ENCODE measurements at regions of chr10 and their contacts with region 1.

Region 1: GRCh38 chr10:71638064-71638821 is 81.3 kb downstream of the C10orf105 start:
- DNase-seq: no peak
- H3K4me3 ChIP-seq: no peak overlapping the region
- H3K27ac ChIP-seq: no peak overlapping the region
- H3K4me1 ChIP-seq: peaks cover 5 to 44% (median 34%) of the 10 kb centered on the region in 4 experiments
- H3K27me3 ChIP-seq: peaks cover 0 to 20% (median 12%) of the 10 kb centered on the region in 4 experiments; a peak in 5 of 7 replicates
- CTCF ChIP-seq: no peak
- EP300 ChIP-seq: no peak
- POLR2A ChIP-seq: no peak
- RAD21 ChIP-seq: no peak

Region 2: DNA sequence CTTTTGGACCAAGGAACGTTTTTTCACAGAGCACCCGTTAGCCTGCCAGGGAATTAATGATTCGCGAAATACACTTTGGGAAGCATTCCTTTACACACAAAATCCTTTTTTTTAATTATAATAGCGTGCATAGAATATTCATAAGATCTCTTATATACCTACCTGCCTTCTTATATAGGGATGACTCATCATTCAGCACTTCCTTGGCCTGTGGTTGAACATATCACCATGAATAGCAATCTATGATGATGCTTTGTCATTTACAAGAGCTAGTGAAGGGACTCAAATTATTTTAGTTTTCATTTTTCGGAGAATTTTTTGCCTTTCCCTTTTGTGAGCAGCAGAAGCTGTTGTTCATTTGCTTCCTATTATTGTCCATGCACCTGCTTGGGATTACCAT is 144.5 kb before region 1 on chr10:
- CTCF ChIA-PET with region 1: no interaction called
- POLR2A ChIA-PET with region 1: no interaction called
- DNase-seq: no peak
- H3K4me3 ChIP-seq: no peak overlapping the region
- H3K27ac ChIP-seq: no peak overlapping the region
- H3K4me1 ChIP-seq: peaks cover 0 to 4% (median 1%) of the 10 kb centered on the region in 4 experiments; a peak in 1 of 7 replicates
- H3K27me3 ChIP-seq: peaks cover 0 to 29% (median 23%) of the 10 kb centered on the region in 4 experiments; a peak in 6 of 7 replicates
- CTCF ChIP-seq: no peak
- EP300 ChIP-seq: no peak
- POLR2A ChIP-seq: no peak
- RAD21 ChIP-seq: no peak

Region 3: DNA sequence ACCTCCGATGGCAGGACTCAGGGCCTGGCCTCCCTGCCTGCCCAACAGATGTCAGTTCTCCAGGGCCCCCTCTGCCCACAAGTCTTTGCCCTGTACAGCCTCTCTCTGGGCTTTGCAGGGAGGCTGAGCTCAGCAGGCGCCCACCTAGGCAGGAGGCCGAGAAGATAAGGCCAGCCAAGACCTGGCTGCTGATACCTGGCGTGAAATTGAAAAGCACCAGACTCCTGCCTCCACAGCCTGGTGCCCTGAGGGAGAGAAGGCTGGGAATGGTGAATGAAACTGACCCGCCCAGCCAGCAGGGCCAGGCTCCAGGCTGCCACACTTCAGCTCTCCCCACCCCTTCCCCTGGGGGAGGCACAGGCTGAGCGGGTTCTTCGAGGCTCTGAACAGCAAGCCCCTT is 95.8 kb before region 1 on chr10:
- CTCF ChIA-PET with region 1: no interaction called
- POLR2A ChIA-PET with region 1: no interaction called
- DNase-seq: no peak
- H3K4me3 ChIP-seq: no peak overlapping the region
- H3K27ac ChIP-seq: no peak overlapping the region
- H3K4me1 ChIP-seq: peaks cover 9 to 34% (median 20%) of the 10 kb centered on the region in 4 experiments
- H3K27me3 ChIP-seq: no peaks in the 10 kb centered on the region; a peak in 1 of 7 replicates
- CTCF ChIP-seq: no peak
- EP300 ChIP-seq: no peak
- POLR2A ChIP-seq: no peak
- RAD21 ChIP-seq: no peak

Region 4: GRCh38 chr10:71623098-71623985 is 14.9 kb before region 1 on chr10:
- CTCF ChIA-PET with region 1: interaction called, 43 read pairs
- POLR2A ChIA-PET with region 1: interaction called, 4 read pairs
- DNase-seq: no peak
- H3K4me3 ChIP-seq: peak overlapping the region in 1 of 4 experiments; percentile 33; a peak in 1 of 8 replicates
- H3K27ac ChIP-seq: no peak overlapping the region
- H3K4me1 ChIP-seq: peaks cover 25 to 52% (median 35%) of the 10 kb centered on the region in 4 experiments
- H3K27me3 ChIP-seq: no peaks in the 10 kb centered on the region
- CTCF ChIP-seq: peak in 2 of 3 experiments; percentile 6 to 46; a peak in 2 of 4 replicates
- EP300 ChIP-seq: no peak
- POLR2A ChIP-seq: no peak
- RAD21 ChIP-seq: peak; percentile 28 to 43; a peak in 3 of 4 replicates

Region 5: GRCh38 chr10:71659111-71659634 is 20.9 kb after region 1 on chr10:
- CTCF ChIA-PET with region 1: interaction called, 10 read pairs
- POLR2A ChIA-PET with region 1: interaction called, 7 read pairs
- DNase-seq: peak in 1 of 2 experiments; percentile 19
- H3K4me3 ChIP-seq: no peak overlapping the region; a peak in 3 of 8 replicates
- H3K27ac ChIP-seq: no peak overlapping the region
- H3K4me1 ChIP-seq: peaks cover 22 to 36% (median 31%) of the 10 kb centered on the region in 4 experiments
- H3K27me3 ChIP-seq: peaks cover 0 to 19% (median 13%) of the 10 kb centered on the region in 4 experiments; a peak in 4 of 7 replicates
- CTCF ChIP-seq: no peak
- EP300 ChIP-seq: no peak
- POLR2A ChIP-seq: no peak
- RAD21 ChIP-seq: no peak

Region 6: GRCh38 chr10:71850637-71851464 is 212.6 kb after region 1 on chr10 and contains the start of gene PSAP:
- CTCF ChIA-PET with region 1: no interaction called
- POLR2A ChIA-PET with region 1: no interaction called
- DNase-seq: peak; percentile 93 to 97
- H3K4me3 ChIP-seq: peak within 1 kb of the TSS; percentile 78 to 96 (median 90)
- H3K27ac ChIP-seq: peak within 1 kb of the TSS; percentile 83
- H3K4me1 ChIP-seq: peaks cover 5 to 9% (median 6%) of the 10 kb centered on the region in 4 experiments; a peak in 4 of 7 replicates
- H3K27me3 ChIP-seq: no peaks in the 10 kb centered on the region
- CTCF ChIP-seq: no peak
- EP300 ChIP-seq: no peak
- POLR2A ChIP-seq: peak; percentile 85 to 96
- RAD21 ChIP-seq: no peak
- total RNA-seq, gene PSAP: 386 and 388 TPM in 2 replicates

Measured in H1 (cell line).